ENCODE measurements at regions of chr16 and their contacts with region 1.

Region 1: DNA sequence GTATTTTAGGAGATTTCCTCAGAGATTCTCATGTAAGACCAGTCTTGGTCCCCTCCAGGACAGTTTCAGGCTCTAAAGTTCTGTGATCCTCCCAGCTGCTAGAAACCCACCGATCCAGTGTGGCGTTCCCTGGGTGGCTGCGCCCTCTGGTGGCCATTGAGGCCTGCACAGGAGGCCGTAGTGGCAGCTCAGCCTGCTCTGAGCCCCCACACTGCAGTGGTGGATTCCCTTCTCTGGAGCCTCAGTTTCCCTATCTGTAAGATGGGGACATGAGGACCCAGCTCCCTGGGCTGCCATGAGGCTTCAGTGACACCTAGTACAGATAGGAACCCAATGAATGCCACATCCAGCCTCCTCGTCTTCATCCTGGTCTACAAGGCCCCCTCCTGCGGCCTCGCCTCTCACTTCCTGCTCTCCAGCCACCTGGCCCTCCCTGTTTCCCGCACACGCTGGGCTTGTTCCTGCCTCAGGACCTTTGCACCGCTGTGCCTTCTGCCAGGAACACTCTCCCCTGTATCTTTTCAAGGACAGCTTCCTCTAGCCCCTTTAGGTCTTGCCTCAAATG is 16.5 kb downstream of the CCDC102A start:
- DNase-seq: peak; percentile 82 to 84 (median 83)
- ATAC-seq: peak; percentile 84 to 92 (median 92)
- H3K4me3 ChIP-seq: no peak overlapping the region
- H3K27ac ChIP-seq: no peak overlapping the region
- H3K4me1 ChIP-seq: peaks cover 0 to 8% (median 0%) of the 10 kb centered on the region in 4 donors
- H3K27me3 ChIP-seq: no peaks in the 10 kb centered on the region
- CTCF ChIP-seq: peak; percentile 94 to 99 (median 98)
- POLR2A ChIP-seq: no peak

Region 2: DNA sequence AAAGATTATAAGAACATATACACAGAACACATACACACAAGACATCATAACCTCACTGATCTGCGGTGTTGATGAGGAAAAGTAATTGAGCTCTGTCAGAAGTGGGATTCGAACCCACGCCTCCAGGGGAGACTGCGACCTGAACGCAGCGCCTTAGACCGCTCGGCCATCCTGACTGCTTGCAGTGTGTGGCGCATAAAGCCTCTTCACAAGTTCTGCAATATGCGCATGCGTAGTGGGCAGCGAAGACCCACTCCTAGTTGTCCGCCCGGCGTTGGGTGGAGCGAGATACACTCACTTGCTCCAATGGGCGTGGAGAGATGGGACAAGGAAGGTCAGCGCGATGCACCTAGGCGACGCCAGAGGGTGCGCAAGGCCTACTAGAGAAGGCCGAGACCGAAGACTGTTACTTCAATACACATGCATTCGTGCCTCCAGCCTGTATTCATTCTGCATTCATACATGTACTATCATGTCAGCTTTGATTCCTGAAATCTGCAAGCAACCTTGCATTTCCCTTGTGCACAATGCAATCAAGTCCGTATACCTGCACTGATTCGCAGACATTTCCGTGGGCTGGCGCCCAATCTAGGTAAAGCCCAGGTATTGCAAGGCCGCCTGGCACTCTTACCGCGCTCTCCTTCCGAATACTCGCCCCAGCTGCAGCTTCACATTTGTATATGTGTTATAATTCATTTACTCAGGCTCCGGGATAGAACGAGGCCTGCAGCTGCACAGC is 219.3 kb before region 1 on chr16:
- intact Hi-C with region 1: loop called in 1 of 2 experiments (anchors 10 kb)
- DNase-seq: peak; percentile 98 to 99 (median 98)
- ATAC-seq: peak; percentile 85 to 96 (median 88)
- H3K4me3 ChIP-seq: peak overlapping the region; percentile 31 to 37 (median 35)
- H3K27ac ChIP-seq: peak overlapping the region; percentile 67 to 88 (median 70)
- H3K4me1 ChIP-seq: peaks cover 0 to 29% (median 16%) of the 10 kb centered on the region in 4 donors
- H3K27me3 ChIP-seq: no peaks in the 10 kb centered on the region
- CTCF ChIP-seq: peak; percentile 95 to 99 (median 96)
- POLR2A ChIP-seq: no peak

Region 3: DNA sequence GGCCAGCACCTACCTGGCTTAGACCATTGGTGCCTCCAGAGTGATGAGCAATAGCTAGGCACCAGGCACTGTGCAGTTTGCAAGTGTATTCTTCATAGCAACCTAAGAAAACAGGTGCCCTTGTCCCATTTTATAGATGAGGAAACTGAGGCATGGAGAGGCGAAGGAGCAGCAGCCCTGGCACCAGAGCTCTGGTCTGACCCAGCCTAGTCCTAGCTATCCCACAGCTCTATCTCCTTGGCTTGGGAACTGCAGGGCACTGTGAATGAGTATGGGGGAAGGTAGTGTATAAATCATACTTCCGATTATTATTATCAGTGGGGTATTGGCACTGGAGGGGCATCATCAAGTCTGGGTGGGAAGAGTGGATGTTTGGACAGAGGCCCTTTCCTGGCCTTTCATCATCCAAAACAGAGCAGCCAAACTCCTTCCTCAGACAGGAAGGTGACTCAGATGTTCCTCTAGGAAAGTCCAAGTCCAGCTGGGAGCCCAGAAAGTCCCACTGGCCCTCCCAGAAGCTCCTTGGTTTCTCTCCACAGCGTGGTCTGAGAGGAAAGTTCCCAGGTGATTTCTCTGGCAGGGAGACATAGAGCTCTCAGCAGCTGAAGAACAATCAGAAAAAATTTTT is 203.4 kb before region 1 on chr16:
- intact Hi-C with region 1: loop called in 1 of 2 experiments (anchors 10 kb)
- DNase-seq: no peak
- ATAC-seq: peak; percentile 62 to 71 (median 66)
- H3K4me3 ChIP-seq: no peak overlapping the region
- H3K27ac ChIP-seq: peak overlapping the region in 1 of 3 donors; percentile 8
- H3K4me1 ChIP-seq: peaks cover 0 to 7% (median 0%) of the 10 kb centered on the region in 4 donors
- H3K27me3 ChIP-seq: no peaks in the 10 kb centered on the region
- CTCF ChIP-seq: no peak
- POLR2A ChIP-seq: no peak

Region 4: DNA sequence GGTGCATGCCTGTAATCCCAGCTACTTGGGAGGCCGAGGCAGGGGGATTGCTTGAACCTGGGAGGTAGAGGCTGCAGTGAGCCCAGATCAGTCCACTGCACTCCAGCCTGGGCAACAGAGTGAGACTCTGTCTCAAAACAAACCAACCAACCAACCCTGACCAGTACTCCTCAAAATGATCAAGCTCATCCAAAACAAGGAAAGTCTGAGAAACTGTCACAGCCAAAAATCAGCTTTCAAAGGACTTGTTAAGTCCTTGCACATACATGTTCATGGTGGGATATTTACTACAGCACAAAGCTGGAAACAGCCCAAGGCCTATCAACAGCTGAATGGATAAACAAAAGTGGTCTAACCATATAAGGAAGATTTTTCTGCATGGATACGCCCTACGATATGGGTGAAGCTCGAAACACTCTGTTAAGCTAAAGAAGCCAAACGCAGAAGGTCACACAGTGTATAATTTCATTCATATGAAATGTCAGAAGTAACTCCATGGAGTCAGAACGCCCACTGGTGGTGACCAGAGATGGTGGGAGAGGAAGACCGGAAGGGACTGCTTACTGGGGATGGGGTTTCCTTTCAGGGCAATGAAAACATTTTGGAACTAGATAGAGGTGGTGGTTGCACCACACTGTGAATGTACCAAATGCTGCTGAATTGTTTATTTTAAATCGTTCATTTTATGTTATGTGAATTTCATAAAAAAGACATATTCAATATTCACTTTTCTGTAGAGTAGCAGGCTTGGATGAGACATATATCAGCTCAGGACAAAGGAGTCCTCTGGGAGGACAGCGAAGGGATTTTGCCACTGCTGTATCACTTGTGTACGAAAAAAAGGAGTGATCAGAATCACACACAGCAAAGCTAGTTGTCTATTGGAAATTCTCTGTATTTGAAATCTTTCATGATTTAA is 97.6 kb before region 1 on chr16:
- intact Hi-C with region 1: loop called (anchors 5 to 10 kb)
- DNase-seq: no peak
- ATAC-seq: peak in 2 of 4 donors; percentile 36 to 43
- H3K4me3 ChIP-seq: no peak overlapping the region
- H3K27ac ChIP-seq: no peak overlapping the region
- H3K4me1 ChIP-seq: peaks cover 0 to 16% (median 6%) of the 10 kb centered on the region in 4 donors
- H3K27me3 ChIP-seq: no peaks in the 10 kb centered on the region
- CTCF ChIP-seq: peak; percentile 46 to 62 (median 58)
- POLR2A ChIP-seq: no peak

Region 5: GRCh38 chr16:57452021-57452420 is 67.9 kb before region 1 on chr16:
- intact Hi-C with region 1: loop called in 1 of 2 experiments (anchors 10 kb)
- DNase-seq: no peak
- ATAC-seq: no peak
- H3K4me3 ChIP-seq: no peak overlapping the region
- H3K27ac ChIP-seq: no peak overlapping the region
- H3K4me1 ChIP-seq: peaks cover 0 to 13% (median 6%) of the 10 kb centered on the region in 4 donors
- H3K27me3 ChIP-seq: no peaks in the 10 kb centered on the region
- CTCF ChIP-seq: no peak
- POLR2A ChIP-seq: no peak

Region 6: DNA sequence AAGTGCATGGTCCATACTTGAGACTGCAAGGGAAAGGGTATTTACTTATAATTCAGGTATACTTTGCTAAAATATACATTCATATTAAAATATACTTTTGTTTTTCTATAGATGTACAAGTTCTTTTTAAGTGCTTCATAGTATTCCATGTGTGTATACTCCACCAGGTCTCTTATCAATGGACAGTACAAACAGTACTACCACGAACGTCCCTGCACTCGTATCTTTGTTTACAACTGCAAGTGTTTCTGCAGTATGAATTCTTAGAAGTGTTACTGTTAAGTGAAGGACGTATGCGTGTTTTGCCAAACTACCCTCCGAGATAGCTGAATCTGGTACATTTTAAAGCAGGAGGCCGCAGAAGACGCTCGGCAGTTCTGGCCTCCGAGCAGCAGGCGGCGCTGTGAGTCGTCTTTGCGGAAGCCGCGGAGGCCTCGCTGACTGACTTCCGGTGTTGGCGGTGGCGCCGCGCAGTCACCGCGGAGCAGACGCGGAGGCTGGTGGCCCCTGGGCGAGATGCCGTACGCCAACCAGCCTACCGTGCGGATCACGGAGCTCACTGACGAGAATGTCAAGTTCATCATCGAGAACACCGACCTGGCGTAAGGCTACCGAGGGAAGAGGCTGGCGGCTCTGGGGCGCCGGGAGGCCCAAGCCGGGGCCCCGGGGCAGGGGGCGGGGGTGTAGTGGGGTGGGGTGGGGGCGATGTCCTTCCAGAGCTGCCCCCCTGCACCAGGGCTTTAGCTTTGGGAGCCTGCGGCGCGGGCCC is 57.5 kb before region 1 on chr16 and contains the start of gene POLR2C:
- intact Hi-C with region 1: loop called (anchors 10 kb)
- DNase-seq: peak; percentile 88 to 91 (median 88)
- ATAC-seq: peak; percentile 96 to 99 (median 98)
- H3K4me3 ChIP-seq: peak within 1 kb of the TSS; percentile 86 to 98 (median 90)
- H3K27ac ChIP-seq: peak within 1 kb of the TSS; percentile 51 to 86 (median 83)
- H3K4me1 ChIP-seq: peaks cover 0 to 15% (median 6%) of the 10 kb centered on the region in 4 donors
- H3K27me3 ChIP-seq: no peaks in the 10 kb centered on the region
- CTCF ChIP-seq: peak; percentile 97 to 99 (median 97)
- POLR2A ChIP-seq: peak; percentile 87
- total RNA-seq, gene POLR2C: 27.7 to 70.2 (median 35.4) TPM